Activated CD4-positive, alpha-beta memory T cell treated with anti-CD3 and anti-CD28 coated beads for 36 hours (primary cell): ENCODE measurements at regions of chr2 and their contacts with region 1.

Region 1: GRCh38 chr2:157492189-157492773 is 48.4 kb upstream of the CYTIP start:
- DNase-seq: peak; percentile 83
- H3K4me3 Mint-ChIP-seq: no peak overlapping the region
- H3K27ac Mint-ChIP-seq: no peak overlapping the region
- H3K4me1 Mint-ChIP-seq: peaks cover 55% of the 10 kb centered on the region
- H3K27me3 Mint-ChIP-seq: no peaks in the 10 kb centered on the region

Region 2: GRCh38 chr2:157267476-157267875 is 224.8 kb before region 1 on chr2:
- CTCF ChIA-PET with region 1: no interaction called
- POLR2A ChIA-PET with region 1: no interaction called
- intact Hi-C with region 1: no loop called
- DNase-seq: peak; percentile 52
- H3K4me3 Mint-ChIP-seq: no peak overlapping the region
- H3K27ac Mint-ChIP-seq: no peak overlapping the region
- H3K4me1 Mint-ChIP-seq: peaks cover 21% of the 10 kb centered on the region
- H3K27me3 Mint-ChIP-seq: peaks cover 2% of the 10 kb centered on the region

Region 3: DNA sequence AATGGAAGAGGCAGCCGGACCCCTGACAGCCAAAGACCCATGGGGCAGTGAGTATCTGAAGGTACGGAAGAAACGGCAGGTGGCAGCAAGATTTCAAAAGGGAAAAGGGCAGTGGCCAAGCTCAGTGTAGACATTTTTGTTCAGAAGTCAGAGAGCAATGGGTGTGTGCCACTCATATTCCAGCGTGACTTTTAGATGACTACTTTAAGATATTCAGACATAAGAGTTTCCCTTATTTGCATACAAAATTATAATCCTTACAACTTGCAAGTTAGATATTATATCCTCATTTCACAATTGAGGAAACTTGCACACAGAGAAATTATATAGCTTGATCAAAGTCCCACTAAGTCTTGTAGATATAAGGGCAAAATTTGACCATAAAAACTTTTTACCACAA is 12.3 kb after region 1 on chr2:
- CTCF ChIA-PET with region 1: interaction called, 12 read pairs
- POLR2A ChIA-PET with region 1: no interaction called
- intact Hi-C with region 1: no loop called
- DNase-seq: no peak
- H3K4me3 Mint-ChIP-seq: no peak overlapping the region
- H3K27ac Mint-ChIP-seq: no peak overlapping the region
- H3K4me1 Mint-ChIP-seq: no peaks in the 10 kb centered on the region
- H3K27me3 Mint-ChIP-seq: peaks cover 10% of the 10 kb centered on the region

Region 4: DNA sequence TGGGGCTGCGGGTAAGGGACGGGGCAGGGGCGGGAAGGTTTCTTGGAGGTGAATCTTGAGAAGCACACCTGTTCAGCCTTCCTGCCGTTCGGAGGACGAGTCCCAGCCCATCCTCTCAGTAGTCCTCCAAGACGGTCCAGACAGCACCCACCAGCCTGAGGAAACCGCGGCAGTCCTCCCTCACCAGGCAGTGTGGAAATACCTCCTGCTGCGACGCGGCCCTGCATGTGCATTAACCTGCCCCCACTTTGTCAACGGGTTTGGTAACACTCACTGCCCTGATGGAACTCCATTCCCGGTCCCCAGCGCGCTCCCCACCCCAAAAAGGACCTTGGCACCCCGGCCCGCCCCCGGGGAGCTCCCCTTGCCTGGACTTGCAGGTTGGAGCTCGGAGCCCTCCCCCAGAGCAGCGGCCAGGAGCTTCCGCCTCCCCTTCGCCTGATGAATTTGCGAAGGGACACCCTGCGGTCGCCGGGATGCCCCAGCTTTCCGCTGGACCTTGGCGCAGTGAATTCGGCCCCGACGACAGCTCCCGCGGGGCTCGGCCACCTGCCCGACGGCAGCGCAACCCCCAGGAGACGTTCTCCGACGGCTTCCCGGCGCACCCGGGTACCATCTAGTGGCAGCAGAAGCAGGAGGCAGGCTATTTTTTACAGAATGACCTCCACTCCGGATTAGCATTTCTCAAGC is 104.9 kb after region 1 on chr2:
- CTCF ChIA-PET with region 1: interaction called, 21 read pairs
- POLR2A ChIA-PET with region 1: no interaction called
- intact Hi-C with region 1: loop called (anchors 1 kb)
- DNase-seq: peak; percentile 72
- H3K4me3 Mint-ChIP-seq: peak overlapping the region; percentile 61
- H3K27ac Mint-ChIP-seq: no peak overlapping the region
- H3K4me1 Mint-ChIP-seq: peaks cover 11% of the 10 kb centered on the region
- H3K27me3 Mint-ChIP-seq: peaks cover 4% of the 10 kb centered on the region